BJ (cell line): ENCODE measurements at regions of chr9 and their contacts with region 1.

Region 1: DNA sequence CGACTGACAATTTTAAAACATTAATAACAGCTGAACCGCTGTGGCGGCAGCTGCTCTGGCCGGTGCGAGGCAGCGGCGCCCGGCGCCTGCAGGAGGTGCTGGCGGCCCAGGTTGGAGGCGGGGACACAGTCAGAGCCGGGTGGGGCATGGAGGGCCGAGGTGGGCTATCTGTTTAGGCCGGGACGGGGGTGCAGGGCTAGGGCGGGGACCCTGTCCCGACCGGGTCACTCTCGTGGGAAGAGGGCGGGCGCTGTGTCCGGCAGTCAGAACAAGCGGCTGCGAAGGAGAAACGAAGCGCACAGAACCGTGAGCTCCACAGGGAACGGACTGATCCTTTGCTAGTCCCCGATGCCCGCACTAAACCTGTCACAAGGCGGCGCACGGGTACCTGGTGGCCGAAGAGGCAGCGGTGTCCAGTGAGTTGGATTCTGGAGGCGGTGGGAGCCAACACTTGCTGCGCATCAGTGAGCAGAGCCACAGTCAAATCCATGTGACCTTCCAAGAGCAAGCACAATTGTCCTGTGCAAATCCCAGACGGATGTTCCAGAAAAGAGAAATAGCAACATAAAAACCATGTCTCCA is 13.7 kb upstream of the ALDOB start:
- DNase-seq: no peak
- H3K4me3 ChIP-seq: peak overlapping the region; percentile 70
- H3K27me3 ChIP-seq: peaks cover 2% of the 10 kb centered on the region; the same call in 1 of the 2 replicates
- CTCF ChIP-seq: peak; percentile 71

Region 2: DNA sequence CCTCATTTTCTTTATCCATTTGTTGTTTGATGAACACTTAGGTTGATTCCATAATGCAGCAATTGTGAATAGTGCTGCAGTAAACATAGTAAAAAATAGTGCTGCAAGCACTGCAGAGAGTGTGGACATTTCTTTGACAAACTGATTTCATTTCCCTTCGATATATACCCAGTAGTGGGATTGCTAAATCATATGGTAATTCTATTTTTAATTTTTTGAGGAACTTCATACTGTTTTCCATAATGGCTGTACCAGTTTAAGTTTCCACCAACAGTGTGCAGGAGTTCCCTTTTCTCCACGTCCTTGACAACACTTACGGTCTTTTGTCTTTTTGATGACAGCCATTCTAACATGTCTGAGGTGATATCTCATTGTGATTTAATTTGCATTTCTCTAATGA is 558.9 kb before region 1 on chr9:
- CTCF ChIA-PET with region 1: no interaction called
- POLR2A ChIA-PET with region 1: no interaction called
- DNase-seq: no peak
- H3K4me3 ChIP-seq: no peak overlapping the region
- H3K27me3 ChIP-seq: no peaks in the 10 kb centered on the region
- CTCF ChIP-seq: no peak

Region 3: DNA sequence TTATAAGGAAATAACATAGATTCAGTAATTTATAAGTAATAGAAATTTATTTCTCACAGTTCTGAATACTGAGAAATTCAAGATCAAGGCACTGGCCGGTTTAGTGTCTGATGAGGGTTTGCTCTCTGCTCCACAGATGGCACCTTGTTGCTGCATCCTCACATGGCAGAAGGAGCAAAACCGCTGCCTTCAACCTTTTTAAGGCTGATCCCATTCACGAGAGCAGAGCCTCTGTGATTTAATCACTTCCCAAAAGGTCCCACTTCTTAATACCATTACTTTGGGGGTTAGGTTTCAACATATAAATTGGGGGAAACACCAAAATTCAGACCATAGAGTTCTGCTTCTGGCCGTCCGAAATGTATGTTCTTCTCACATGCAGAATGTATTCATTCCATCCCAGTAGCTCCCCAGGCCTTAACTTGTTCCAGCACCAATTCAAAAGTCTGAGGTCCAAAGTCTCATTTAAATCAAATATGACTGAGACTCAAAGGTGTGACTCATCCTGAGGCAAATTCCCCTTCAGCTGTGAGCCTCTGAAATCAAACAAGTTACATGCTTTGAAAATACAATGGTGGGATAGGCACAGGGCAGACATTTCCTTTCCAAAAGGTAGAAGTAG is 95.0 kb before region 1 on chr9:
- CTCF ChIA-PET with region 1: no interaction called
- POLR2A ChIA-PET with region 1: no interaction called
- DNase-seq: no peak
- H3K4me3 ChIP-seq: no peak overlapping the region
- H3K27me3 ChIP-seq: no peaks in the 10 kb centered on the region
- CTCF ChIP-seq: no peak

Region 4: DNA sequence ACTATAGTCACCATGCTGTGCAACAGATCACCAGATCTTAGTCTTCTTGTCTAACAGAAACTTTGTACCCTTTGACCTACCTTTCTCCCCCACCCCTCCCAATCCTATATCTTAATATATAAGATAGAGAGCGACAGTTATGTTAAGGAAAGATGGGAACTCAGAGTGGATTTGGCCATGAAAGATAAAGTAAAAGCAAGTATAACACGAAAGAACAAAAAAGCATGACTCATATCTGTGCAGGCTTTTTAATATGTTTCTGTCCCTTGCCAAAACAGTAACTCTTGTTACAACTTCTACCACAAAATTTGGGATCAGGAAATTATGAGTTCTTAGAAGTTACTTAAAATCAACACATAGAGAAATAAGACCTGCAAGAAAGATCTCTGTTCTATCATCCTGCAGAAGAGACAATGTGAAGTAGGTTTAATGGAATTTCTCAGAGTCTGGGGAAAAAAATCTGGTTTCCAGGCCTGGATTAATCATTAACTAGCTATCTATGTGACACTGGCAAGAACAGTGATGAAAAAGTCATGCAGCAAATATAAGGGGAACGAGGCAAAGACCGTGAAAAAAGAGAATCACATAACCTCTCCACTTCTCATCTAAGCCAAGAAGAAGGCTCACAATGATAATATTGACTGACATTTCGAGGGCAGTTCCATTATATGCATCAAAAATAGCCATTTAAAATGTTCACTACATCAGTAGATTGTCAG is 83.0 kb before region 1 on chr9:
- CTCF ChIA-PET with region 1: no interaction called
- POLR2A ChIA-PET with region 1: no interaction called
- DNase-seq: peak; percentile 7
- H3K4me3 ChIP-seq: no peak overlapping the region
- H3K27me3 ChIP-seq: no peaks in the 10 kb centered on the region
- CTCF ChIP-seq: no peak

Region 5: DNA sequence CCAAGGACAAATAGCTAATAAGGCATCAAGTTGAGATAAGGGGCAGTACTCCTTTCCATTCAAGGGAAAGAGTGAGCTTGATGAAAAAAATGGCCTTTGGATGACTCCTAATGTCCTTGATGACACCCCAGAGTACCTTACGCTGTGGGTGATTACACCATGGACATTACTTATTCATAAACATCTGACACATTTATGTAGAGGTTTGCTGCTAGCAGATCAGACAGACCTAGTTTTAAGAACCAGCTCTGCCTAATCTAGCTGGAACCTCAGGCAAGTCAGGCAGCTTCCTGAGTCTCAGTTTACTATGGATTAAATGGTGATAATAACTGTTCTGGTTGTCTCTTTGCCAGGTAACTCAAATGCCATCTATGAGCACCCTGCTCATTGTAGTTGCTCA is 16.5 kb before region 1 on chr9:
- CTCF ChIA-PET with region 1: interaction called, 21 read pairs
- POLR2A ChIA-PET with region 1: no interaction called
- DNase-seq: no peak
- H3K4me3 ChIP-seq: no peak overlapping the region
- H3K27me3 ChIP-seq: peaks cover 2% of the 10 kb centered on the region; the same call in 1 of the 2 replicates
- CTCF ChIP-seq: no peak

Region 6: DNA sequence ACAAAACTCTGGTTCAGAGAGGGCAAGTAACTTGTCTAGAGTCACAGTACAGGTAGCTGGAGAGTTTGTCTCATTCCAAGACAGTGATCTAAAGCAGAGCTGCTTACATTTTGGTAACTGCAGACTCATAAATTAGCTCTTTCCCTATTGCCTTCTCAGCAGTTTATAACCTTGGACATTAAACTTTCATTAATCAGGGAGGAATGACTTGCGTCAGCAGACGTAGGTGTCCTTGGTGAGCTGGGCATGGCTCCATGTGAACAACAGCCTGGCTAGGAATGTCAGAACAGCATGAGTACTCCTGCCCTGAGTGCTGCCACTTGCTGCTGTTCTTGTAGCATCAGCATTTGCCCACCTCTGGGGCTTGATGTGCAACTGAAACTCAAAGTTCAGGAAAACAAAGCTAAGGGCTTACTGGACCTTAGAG is 11.4 kb before region 1 on chr9:
- CTCF ChIA-PET with region 1: interaction called, 21 read pairs
- POLR2A ChIA-PET with region 1: no interaction called
- DNase-seq: no peak
- H3K4me3 ChIP-seq: no peak overlapping the region
- H3K27me3 ChIP-seq: peaks cover 2% of the 10 kb centered on the region; the same call in 1 of the 2 replicates
- CTCF ChIP-seq: no peak

Region 7: GRCh38 chr9:101533334-101534107 is 84.3 kb after region 1 on chr9 and contains the start of gene RNF20:
- CTCF ChIA-PET with region 1: interaction called, 490 read pairs
- POLR2A ChIA-PET with region 1: no interaction called
- DNase-seq: peak; percentile 91
- H3K4me3 ChIP-seq: peak within 1 kb of the TSS; percentile 61
- H3K27me3 ChIP-seq: no peaks in the 10 kb centered on the region
- CTCF ChIP-seq: no peak
- polyA plus RNA-seq, gene RNF20: 18.0 and 30.4 TPM in 2 replicates

Region 8: DNA sequence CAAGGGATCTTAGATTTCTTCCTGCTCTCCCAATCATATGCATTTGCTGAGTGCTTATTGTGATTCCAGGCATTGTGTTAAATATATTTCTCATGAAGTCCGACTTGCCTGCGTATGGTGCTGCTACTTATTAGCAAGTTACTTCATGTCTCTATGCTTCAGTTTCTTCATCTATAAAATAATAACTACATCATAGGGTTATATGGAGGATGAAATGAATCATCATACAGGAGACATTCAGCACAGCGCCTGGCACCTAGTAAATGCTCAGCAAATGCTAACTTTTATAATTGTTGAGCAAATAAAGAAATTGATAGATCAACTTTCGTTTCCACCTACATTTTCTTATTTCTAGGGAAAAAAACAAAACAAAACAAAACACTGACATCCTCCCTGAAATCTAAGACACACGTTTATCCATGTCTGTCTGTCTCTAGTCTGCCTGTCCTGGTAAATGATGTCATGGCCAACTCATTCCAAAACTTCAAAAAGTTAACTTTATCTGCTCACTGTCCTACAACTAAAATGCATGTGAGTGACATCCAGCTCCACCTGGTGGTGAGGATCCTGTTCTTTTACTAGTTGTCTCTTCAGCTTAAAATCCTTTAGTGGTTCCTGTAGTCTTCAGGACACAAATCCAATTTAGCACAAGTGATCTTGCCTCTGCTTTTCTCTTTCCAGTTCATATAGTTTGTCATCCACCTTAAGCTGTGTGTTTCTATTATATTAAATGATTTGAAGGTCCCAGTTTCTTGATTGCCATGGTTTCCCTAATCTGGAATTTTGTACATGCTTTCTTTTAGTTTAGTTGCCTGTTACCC is 117.9 kb after region 1 on chr9:
- CTCF ChIA-PET with region 1: interaction called, 10 read pairs
- POLR2A ChIA-PET with region 1: no interaction called
- DNase-seq: no peak
- H3K4me3 ChIP-seq: no peak overlapping the region
- H3K27me3 ChIP-seq: no peaks in the 10 kb centered on the region
- CTCF ChIP-seq: peak; percentile 59